SK-N-SH (cell line): ENCODE measurements at regions of chr10 and their contacts with region 1.

Region 1: DNA sequence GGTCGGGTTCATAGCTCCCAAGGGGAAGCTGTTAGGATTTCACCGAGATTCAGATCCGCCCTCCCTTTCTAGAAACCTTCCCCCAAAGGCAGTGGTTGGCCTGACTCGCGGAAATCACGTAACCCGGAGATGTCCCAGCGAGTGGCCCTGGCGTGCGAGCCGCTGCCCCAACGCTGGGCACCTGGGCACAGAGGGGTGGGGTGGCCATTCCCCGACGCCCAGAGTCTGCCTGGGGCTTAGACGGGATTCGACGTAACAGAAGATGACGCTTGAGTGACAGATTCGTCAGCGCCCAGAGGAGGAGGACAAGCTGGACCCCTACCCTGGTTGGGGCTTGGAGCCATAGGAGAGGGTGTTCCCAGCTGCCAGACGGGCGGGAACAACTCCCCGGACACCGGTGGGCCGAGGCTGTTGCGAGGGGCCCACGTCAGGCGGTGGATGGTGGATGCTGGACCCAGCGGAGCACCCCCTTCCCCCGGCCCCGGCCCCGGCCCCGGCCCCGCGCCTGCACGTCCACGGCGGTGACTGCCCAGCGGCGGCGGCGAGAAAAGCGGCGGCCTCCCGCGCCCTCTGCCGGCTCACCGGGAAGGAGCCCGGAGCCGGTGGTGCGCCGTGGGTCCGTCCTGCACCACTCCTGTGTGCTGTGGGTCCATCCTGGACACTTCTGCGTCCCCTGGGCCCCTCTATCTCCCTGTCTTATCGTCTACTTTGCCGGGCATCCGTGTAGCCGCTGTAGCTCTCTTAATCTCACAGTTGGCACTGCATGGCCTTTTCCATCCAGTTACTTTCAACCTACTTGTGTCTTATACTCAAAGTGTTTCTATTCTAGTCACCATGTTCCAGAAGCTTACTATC is 35.4 kb upstream of the KNDC1 start:
- DNase-seq: peak; percentile 84
- H3K4me3 ChIP-seq: no peak overlapping the region
- H3K27ac ChIP-seq: no peak overlapping the region
- H3K4me1 ChIP-seq: no peaks in the 10 kb centered on the region
- H3K27me3 ChIP-seq: no peaks in the 10 kb centered on the region
- CTCF ChIP-seq: peak; percentile 29; the same call in 1 of the 2 replicates
- EP300 ChIP-seq: no peak
- RAD21 ChIP-seq: peak; percentile 57

Region 2: GRCh38 chr10:132897516-132898381 is 226.8 kb before region 1 on chr10:
- CTCF ChIA-PET with region 1: interaction called, 43 read pairs
- POLR2A ChIA-PET with region 1: no interaction called
- DNase-seq: peak; percentile 44
- H3K4me3 ChIP-seq: no peak overlapping the region
- H3K27ac ChIP-seq: no peak overlapping the region
- H3K4me1 ChIP-seq: no peaks in the 10 kb centered on the region; a peak in 1 of 4 replicates
- H3K27me3 ChIP-seq: no peaks in the 10 kb centered on the region; the same call in 1 of the 2 replicates
- CTCF ChIP-seq: no peak
- EP300 ChIP-seq: no peak
- RAD21 ChIP-seq: no peak

Region 3: DNA sequence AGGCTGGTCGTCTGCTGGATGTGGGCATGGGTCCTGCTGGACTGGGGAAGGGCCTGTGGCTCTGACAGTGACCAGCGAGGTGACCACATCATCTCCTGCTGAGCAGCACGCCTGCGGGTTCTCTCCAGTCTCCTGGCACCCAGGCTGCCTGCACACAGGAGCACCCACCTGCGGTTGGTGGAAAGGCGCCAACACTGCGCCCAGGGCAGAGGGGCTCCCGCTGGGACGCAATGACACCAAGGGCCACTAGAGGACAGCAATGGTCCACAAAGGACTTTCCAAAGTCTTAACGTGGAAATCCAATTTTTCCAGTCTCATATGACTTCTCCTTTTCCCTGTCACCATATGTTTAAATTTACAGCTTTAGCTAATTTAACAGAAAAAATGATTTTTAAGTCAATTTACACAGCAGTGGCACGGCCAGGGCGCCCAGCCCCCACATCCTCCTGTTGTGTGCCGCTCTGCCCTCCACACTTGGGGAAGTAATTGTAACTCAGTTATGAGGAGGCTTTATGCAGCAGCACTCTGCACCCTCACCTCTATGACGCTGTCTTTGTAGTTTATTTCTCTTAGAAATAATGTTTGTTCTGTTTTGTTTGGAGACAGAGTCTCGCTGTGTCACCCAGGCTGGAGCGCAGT is 220.3 kb before region 1 on chr10:
- CTCF ChIA-PET with region 1: interaction called, 43 read pairs
- POLR2A ChIA-PET with region 1: no interaction called
- DNase-seq: peak; percentile 90
- H3K4me3 ChIP-seq: no peak overlapping the region
- H3K27ac ChIP-seq: no peak overlapping the region
- H3K4me1 ChIP-seq: no peaks in the 10 kb centered on the region
- H3K27me3 ChIP-seq: no peaks in the 10 kb centered on the region; the same call in 1 of the 2 replicates
- CTCF ChIP-seq: peak; percentile 72
- EP300 ChIP-seq: no peak
- RAD21 ChIP-seq: peak; percentile 82